ENCODE measurements at regions of chr3 and their contacts with region 1.

Region 1: DNA sequence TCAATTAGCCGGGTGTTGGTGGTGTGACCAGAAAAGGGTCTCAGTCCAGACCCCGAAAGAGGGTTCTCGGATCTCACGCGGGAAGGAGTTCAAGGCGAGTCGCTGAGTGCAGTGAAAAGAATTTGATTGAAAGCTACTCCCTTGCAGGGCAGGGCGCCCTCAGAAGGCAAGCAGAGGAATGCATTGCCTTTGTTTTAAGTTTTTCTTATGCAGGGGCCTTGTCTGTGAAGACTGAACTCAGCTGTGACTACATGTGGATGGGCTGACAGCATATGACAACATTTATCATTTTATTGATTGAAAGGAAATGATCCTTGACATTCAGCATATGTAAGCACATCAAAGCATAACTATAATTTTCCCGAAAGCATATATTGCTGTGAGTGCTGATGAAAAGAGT is 11.8 kb downstream of the CPN2 start:
- DNase-seq: no peak
- ATAC-seq: no peak
- H3K4me3 ChIP-seq: no peak overlapping the region
- H3K27ac ChIP-seq: no peak overlapping the region
- H3K4me1 ChIP-seq: no peaks in the 10 kb centered on the region
- H3K27me3 ChIP-seq: no peaks in the 10 kb centered on the region
- CTCF ChIP-seq: no peak
- POLR2A ChIP-seq: no peak

Region 2: DNA sequence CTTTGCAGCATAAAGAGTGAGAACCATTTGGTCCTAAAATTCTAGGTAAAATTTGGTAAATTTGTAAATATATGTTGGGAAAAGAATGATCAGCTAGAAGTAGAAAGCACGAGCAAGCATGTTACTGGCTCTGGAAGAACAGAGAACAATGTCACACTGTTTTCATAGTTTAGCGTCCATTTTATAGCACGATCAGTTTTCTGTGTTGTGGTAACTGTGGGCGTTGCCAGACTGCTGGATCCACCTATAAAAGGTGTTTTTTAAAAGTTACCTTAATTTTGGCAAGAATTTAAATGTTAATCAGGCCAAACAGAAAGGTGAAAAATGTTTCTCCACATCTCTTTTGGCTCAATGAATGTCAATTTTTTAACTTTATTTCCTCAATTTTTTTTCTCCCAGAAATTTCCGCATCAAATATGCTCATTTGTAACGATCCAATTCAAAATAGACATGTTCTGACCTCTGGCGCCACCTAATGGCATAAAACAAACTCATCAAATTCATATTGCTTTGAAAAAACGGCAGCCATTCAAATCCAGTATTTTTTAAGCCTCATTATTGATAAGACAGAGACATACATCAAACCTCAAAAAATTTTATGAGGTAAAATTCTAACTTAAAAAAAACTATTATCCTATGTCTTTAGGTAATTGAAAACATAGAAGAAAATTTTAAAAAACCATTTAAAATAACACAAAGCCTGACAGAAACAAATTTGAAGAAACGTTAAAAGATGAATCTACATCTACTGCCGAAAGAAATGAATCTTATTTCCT is 65.2 kb after region 1 on chr3:
- intact Hi-C with region 1: loop called (anchors 5 kb)
- DNase-seq: peak; percentile 41 to 56 (median 46)
- ATAC-seq: peak; percentile 50
- H3K4me3 ChIP-seq: no peak overlapping the region
- H3K27ac ChIP-seq: peak overlapping the region in 1 of 4 donors; percentile 57
- H3K4me1 ChIP-seq: no peaks in the 10 kb centered on the region
- H3K27me3 ChIP-seq: no peaks in the 10 kb centered on the region
- CTCF ChIP-seq: peak; percentile 29 to 73 (median 64)
- POLR2A ChIP-seq: no peak

Measured in body of pancreas (tissue), 4 donors.